ENCODE measurements at regions of chr2 and their contacts with region 1.

Region 1: DNA sequence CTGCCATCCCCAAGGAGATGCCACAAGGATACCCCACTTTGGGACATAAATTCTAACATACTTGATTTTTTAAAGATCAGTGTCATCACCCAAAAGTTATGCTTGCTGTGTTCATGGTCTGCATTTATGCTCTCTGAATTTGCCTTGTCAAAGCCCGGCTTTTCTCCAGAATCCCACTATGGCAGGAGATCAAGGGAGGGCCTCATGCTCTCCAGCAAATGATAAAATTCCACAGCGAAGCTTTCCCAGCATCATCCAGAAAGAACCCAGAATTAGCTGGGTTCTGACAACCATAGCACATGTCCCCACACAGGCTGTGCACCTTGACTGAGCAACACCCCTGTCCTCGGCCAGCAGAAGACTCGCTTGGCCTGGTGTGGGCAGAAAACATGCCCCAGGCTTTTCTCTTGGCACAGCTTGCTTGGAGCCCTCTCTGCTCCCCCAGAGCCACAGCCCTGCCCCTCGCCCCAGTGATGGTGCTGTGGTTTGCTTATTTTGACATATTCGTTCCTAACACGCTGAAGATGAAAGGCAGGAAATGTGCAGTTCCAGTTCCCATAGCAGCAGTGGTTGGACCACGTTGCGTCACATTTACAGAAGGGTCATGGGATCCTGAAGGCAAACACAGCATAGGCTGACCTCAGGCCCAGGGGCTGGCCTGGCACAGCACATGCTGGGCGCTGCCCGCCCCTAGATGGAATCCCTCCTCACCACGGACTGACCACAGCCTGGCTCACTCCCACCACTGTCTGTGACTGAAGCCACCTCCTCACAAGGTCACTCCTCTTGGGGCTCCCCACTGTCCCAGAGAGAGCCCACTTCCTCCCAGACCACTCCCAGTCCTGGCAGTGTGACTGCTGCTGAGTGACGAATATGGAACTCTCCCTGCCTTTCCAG is 14.1 kb upstream of the CHRNA1 start:
- DNase-seq: peak; percentile 91
- H3K4me3 Mint-ChIP-seq: peak overlapping the region; percentile 17
- H3K27ac Mint-ChIP-seq: peak overlapping the region; percentile 79
- H3K4me1 Mint-ChIP-seq: peaks cover 42% of the 10 kb centered on the region
- H3K27me3 Mint-ChIP-seq: no peaks in the 10 kb centered on the region

Region 2: DNA sequence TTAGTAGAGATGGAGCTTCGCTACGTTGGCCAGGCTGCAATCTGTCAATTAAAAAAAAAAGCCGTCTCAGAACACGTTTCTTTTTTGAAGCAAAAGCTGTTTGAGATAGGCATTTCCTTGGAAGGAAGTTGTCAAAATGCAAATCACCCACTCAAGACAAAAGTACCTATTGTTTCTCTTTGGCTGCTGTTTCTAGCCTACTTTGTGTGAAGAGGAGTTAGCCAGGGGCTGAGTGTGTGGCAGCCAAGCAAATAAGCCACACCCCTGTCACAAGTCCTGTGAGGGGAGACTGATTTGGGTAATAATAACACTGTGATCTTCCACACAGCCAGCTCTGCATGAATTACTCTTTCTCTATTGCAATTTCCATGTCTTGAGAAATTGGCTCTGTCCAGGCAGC is 1471.0 kb before region 1 on chr2:
- CTCF ChIA-PET with region 1: no interaction called
- POLR2A ChIA-PET with region 1: no interaction called
- intact Hi-C with region 1: no loop called
- DNase-seq: no peak
- H3K4me3 Mint-ChIP-seq: no peak overlapping the region
- H3K27ac Mint-ChIP-seq: no peak overlapping the region
- H3K4me1 Mint-ChIP-seq: peaks cover 3% of the 10 kb centered on the region
- H3K27me3 Mint-ChIP-seq: peaks cover 1% of the 10 kb centered on the region

Region 3: GRCh38 chr2:174797781-174798276 is 19.5 kb after region 1 on chr2:
- CTCF ChIA-PET with region 1: interaction called, 4 read pairs
- POLR2A ChIA-PET with region 1: no interaction called
- intact Hi-C with region 1: loop called (anchors 1 kb)
- DNase-seq: no peak
- H3K4me3 Mint-ChIP-seq: no peak overlapping the region
- H3K27ac Mint-ChIP-seq: no peak overlapping the region
- H3K4me1 Mint-ChIP-seq: peaks cover 24% of the 10 kb centered on the region
- H3K27me3 Mint-ChIP-seq: no peaks in the 10 kb centered on the region

Region 4: GRCh38 chr2:174807931-174808330 is 29.6 kb after region 1 on chr2:
- CTCF ChIA-PET with region 1: no interaction called
- POLR2A ChIA-PET with region 1: no interaction called
- intact Hi-C with region 1: no loop called
- DNase-seq: no peak
- H3K4me3 Mint-ChIP-seq: no peak overlapping the region
- H3K27ac Mint-ChIP-seq: no peak overlapping the region
- H3K4me1 Mint-ChIP-seq: no peaks in the 10 kb centered on the region
- H3K27me3 Mint-ChIP-seq: no peaks in the 10 kb centered on the region

Region 5: GRCh38 chr2:174901075-174901474 is 122.7 kb after region 1 on chr2:
- CTCF ChIA-PET with region 1: interaction called, 3 read pairs
- POLR2A ChIA-PET with region 1: no interaction called
- intact Hi-C with region 1: loop called (anchors 5 kb)
- DNase-seq: peak; percentile 43
- H3K4me3 Mint-ChIP-seq: peak overlapping the region; percentile 3
- H3K27ac Mint-ChIP-seq: peak overlapping the region; percentile 0
- H3K4me1 Mint-ChIP-seq: peaks cover 22% of the 10 kb centered on the region
- H3K27me3 Mint-ChIP-seq: no peaks in the 10 kb centered on the region